B cell (primary cell): ENCODE measurements at regions of chr4 and their contacts with region 1.

Region 1: GRCh38 chr4:153249199-153250041 is 45.2 kb downstream of the TRIM2 start:
- DNase-seq: peak; percentile 96
- ATAC-seq: peak; percentile 98
- H3K4me3 ChIP-seq: peak overlapping the region; percentile 47 to 81 (median 61)
- H3K4me3 Mint-ChIP-seq: peak overlapping the region; percentile 93
- H3K27ac ChIP-seq: peak overlapping the region; percentile 72 to 87
- H3K27ac Mint-ChIP-seq: peak overlapping the region; percentile 85
- H3K4me1 ChIP-seq: peaks cover 12 to 22% of the 10 kb centered on the region in 2 donors
- H3K4me1 Mint-ChIP-seq: peaks cover 21% of the 10 kb centered on the region
- H3K27me3 ChIP-seq: peaks cover 0 to 3% (median 0%) of the 10 kb centered on the region in 4 experiments
- H3K27me3 Mint-ChIP-seq: no peaks in the 10 kb centered on the region
- CTCF ChIP-seq: no peak

Region 2: GRCh38 chr4:153137159-153137558 is 112.3 kb before region 1 on chr4:
- CTCF ChIA-PET with region 1: no interaction called
- POLR2A ChIA-PET with region 1: no interaction called
- intact Hi-C with region 1: loop called (anchors 5 kb)
- DNase-seq: no peak
- ATAC-seq: no peak
- H3K4me3 ChIP-seq: no peak overlapping the region
- H3K4me3 Mint-ChIP-seq: no peak overlapping the region
- H3K27ac ChIP-seq: no peak overlapping the region
- H3K27ac Mint-ChIP-seq: no peak overlapping the region
- H3K4me1 ChIP-seq: peaks cover 28 to 35% of the 10 kb centered on the region in 2 donors
- H3K4me1 Mint-ChIP-seq: peaks cover 26% of the 10 kb centered on the region
- H3K27me3 ChIP-seq: peaks cover 0 to 22% (median 9%) of the 10 kb centered on the region in 4 experiments
- H3K27me3 Mint-ChIP-seq: peaks cover 39% of the 10 kb centered on the region
- CTCF ChIP-seq: no peak

Region 3: GRCh38 chr4:153153339-153153871 is 96.0 kb before region 1 on chr4:
- CTCF ChIA-PET with region 1: no interaction called
- POLR2A ChIA-PET with region 1: no interaction called
- intact Hi-C with region 1: loop called (anchors 5 kb)
- DNase-seq: peak; percentile 78
- ATAC-seq: peak; percentile 75
- H3K4me3 ChIP-seq: peak overlapping the region; percentile 42 to 75 (median 56)
- H3K4me3 Mint-ChIP-seq: peak overlapping the region; percentile 94
- H3K27ac ChIP-seq: no peak overlapping the region
- H3K27ac Mint-ChIP-seq: peak overlapping the region; percentile 37
- H3K4me1 ChIP-seq: peaks cover 26 to 28% of the 10 kb centered on the region in 2 donors
- H3K4me1 Mint-ChIP-seq: peaks cover 29% of the 10 kb centered on the region
- H3K27me3 ChIP-seq: peaks cover 0 to 39% (median 19%) of the 10 kb centered on the region in 4 experiments
- H3K27me3 Mint-ChIP-seq: peaks cover 48% of the 10 kb centered on the region
- CTCF ChIP-seq: no peak

Region 4: DNA sequence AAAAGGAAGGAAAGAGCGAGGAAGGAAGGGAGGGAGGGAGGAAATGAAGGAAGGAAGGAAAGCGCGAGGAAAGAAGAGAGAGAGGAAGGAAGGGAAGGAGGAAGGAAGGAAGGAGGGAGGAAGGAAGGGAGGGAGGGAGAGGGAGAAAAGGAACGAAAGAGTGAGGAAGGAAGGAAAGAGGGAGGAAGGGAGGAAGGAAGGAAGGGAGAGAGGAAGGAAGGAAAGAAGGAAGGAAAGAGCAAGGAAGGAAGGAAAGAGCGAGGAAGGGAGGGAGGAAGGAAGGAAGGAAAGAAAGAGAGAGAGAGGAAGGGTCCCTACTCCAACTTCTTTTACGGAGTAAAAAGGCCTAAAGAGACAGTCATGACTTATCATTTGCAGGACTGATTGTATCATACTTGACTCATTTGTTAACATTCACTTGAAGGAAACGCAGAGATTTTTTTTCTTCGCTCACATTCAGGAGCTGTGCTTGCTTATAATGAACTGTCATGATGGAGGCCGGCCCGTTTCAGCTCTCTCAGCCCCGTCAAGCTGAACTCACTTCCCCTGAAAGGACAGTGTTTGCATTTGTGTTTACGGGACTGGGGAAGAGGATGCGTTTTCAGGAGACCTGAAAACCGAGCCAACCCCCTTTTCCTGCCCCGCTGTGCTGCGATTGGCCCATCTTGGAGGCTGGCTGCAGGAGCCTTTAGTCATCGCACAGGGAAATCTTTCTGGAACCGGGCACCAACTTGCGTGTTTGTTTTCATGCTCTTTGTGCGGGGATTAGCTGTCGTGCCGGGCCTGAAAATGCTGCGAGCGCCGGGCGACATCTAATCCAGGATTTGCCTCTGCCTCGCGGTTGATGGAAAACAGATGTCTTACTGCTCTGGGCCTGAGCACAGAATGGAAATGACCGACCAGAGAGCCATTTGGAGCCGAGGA is 27.4 kb before region 1 on chr4:
- CTCF ChIA-PET with region 1: no interaction called
- POLR2A ChIA-PET with region 1: no interaction called
- intact Hi-C with region 1: loop called (anchors 1 kb)
- DNase-seq: peak; percentile 62
- ATAC-seq: peak; percentile 32
- H3K4me3 ChIP-seq: peak overlapping the region; percentile 2 to 84 (median 67)
- H3K4me3 Mint-ChIP-seq: peak overlapping the region; percentile 92
- H3K27ac ChIP-seq: peak overlapping the region in 1 of 2 donors; percentile 48
- H3K27ac Mint-ChIP-seq: peak overlapping the region; percentile 67
- H3K4me1 ChIP-seq: peaks cover 11 to 18% of the 10 kb centered on the region in 2 donors
- H3K4me1 Mint-ChIP-seq: peaks cover 35% of the 10 kb centered on the region
- H3K27me3 ChIP-seq: peaks cover 0 to 3% (median 0%) of the 10 kb centered on the region in 4 experiments
- H3K27me3 Mint-ChIP-seq: no peaks in the 10 kb centered on the region
- CTCF ChIP-seq: no peak

Region 5: DNA sequence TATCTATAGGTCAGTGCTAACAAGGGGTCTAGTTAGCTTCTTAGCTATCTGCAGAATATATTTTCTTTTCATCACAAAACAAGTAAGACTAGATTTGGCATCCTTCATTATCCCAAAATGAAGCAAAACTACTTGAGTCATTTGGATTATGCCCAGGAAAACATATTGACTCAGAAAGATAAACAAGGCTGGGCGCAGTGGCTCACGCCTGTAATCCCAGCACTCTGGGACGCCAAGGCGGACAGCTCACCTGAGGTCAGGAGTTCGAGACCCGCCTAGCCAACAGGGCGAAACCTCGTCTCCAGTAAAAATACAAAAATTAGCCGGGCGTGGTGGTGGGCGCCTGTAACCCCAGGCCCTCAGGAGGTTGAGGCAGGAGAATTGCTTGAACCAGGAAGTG is 77.1 kb after region 1 on chr4:
- CTCF ChIA-PET with region 1: no interaction called
- POLR2A ChIA-PET with region 1: no interaction called
- intact Hi-C with region 1: loop called (anchors 10 kb)
- DNase-seq: no peak
- ATAC-seq: no peak
- H3K4me3 ChIP-seq: no peak overlapping the region
- H3K4me3 Mint-ChIP-seq: no peak overlapping the region
- H3K27ac ChIP-seq: no peak overlapping the region
- H3K27ac Mint-ChIP-seq: no peak overlapping the region
- H3K4me1 ChIP-seq: peaks cover 0 to 5% of the 10 kb centered on the region in 2 donors
- H3K4me1 Mint-ChIP-seq: peaks cover 6% of the 10 kb centered on the region
- H3K27me3 ChIP-seq: no peaks in the 10 kb centered on the region
- H3K27me3 Mint-ChIP-seq: no peaks in the 10 kb centered on the region
- CTCF ChIP-seq: no peak

Region 6: GRCh38 chr4:153579872-153580271 is 330.5 kb after region 1 on chr4:
- CTCF ChIA-PET with region 1: no interaction called
- POLR2A ChIA-PET with region 1: no interaction called
- intact Hi-C with region 1: loop called (anchors 10 kb)
- DNase-seq: peak; percentile 60
- ATAC-seq: peak; percentile 79
- H3K4me3 ChIP-seq: no peak overlapping the region
- H3K4me3 Mint-ChIP-seq: peak overlapping the region; percentile 24
- H3K27ac ChIP-seq: peak overlapping the region in 1 of 2 donors; percentile 20
- H3K27ac Mint-ChIP-seq: peak overlapping the region; percentile 55
- H3K4me1 ChIP-seq: peaks cover 48 to 54% of the 10 kb centered on the region in 2 donors
- H3K4me1 Mint-ChIP-seq: peaks cover 71% of the 10 kb centered on the region
- H3K27me3 ChIP-seq: no peaks in the 10 kb centered on the region
- H3K27me3 Mint-ChIP-seq: no peaks in the 10 kb centered on the region
- CTCF ChIP-seq: no peak